Activated CD4-positive, alpha-beta T cell treated with anti-CD3 and anti-CD28 coated beads, Interleukin-2, amount 10 ng/mL, durations not matched to agents 24 days and 14 days (primary cell): ENCODE measurements at regions of chr10 and their contacts with region 1.

Region 1: DNA sequence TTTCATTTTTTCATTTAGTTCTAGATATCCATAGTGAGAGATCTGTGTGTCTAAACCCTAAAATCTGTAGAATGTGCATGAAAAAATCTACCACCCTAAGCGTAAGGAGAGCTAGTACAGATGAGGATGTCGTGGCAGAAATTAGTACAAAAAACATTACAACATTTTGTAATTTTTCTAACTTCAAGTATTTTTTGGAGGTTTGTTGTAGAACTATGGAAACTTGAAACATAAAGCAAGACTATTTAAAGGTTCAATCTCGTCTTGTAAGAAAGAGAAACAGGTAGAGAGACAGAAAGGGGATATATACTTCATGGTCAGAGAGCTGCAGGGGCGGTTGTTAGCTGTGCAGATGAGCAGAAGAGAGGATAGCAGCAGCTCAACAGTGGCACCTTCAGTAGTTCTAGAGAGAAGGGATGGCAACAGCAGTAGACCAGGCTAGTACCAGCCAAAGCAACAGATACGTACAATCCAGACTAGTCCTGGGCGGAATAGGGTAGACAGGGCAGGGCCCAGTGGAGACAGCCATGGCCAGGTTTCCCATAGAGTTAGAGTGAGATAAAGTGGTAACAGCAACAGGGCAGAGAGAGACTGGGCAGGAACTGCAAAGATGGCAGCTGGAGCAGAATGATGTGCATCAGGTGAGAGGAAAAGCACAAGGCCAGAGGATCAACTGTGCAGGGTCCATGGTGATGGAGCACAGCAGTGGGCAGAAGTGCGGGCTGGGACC is 145.2 kb downstream of the FRMD4A start:
- DNase-seq: peak; percentile 84
- H3K4me3 Mint-ChIP-seq: peak overlapping the region; percentile 62
- H3K27ac Mint-ChIP-seq: peak overlapping the region; percentile 92
- H3K4me1 Mint-ChIP-seq: peaks cover 19% of the 10 kb centered on the region
- H3K27me3 Mint-ChIP-seq: peaks cover 58% of the 10 kb centered on the region

Region 2: DNA sequence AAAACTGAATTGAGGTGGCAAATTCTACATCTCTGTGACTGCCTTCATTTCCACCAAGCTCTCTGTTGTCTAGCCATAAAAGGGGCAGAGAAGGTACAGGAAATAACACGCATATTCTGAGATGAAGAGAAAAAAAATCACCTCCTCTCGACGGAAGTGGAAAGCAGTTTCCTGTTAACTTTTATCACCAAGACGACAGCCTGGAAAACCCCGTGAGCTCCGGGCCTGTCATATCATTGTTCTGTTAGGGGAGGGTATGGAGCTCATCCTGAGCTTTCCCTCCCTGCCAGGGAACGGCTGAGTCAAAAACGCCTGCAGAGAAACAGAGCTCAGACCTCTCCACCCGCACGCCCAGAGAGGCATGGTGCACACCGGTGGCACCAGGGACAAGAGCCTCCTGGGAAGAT is 398.5 kb before region 1 on chr10:
- intact Hi-C with region 1: loop called (anchors 2 kb)
- DNase-seq: peak; percentile 94
- H3K4me3 Mint-ChIP-seq: peak overlapping the region; percentile 71
- H3K27ac Mint-ChIP-seq: peak overlapping the region; percentile 91
- H3K4me1 Mint-ChIP-seq: peaks cover 29% of the 10 kb centered on the region
- H3K27me3 Mint-ChIP-seq: no peaks in the 10 kb centered on the region

Region 3: GRCh38 chr10:14009371-14010100 is 175.9 kb before region 1 on chr10:
- intact Hi-C with region 1: loop called (anchors 2 kb)
- DNase-seq: peak; percentile 85
- H3K4me3 Mint-ChIP-seq: peak overlapping the region; percentile 82
- H3K27ac Mint-ChIP-seq: peak overlapping the region; percentile 82
- H3K4me1 Mint-ChIP-seq: peaks cover 28% of the 10 kb centered on the region
- H3K27me3 Mint-ChIP-seq: peaks cover 22% of the 10 kb centered on the region

Region 4: GRCh38 chr10:14282276-14282675 is 96.8 kb after region 1 on chr10:
- intact Hi-C with region 1: no loop called
- DNase-seq: no peak
- H3K4me3 Mint-ChIP-seq: no peak overlapping the region
- H3K27ac Mint-ChIP-seq: no peak overlapping the region
- H3K4me1 Mint-ChIP-seq: no peaks in the 10 kb centered on the region
- H3K27me3 Mint-ChIP-seq: peaks cover 4% of the 10 kb centered on the region

Region 5: DNA sequence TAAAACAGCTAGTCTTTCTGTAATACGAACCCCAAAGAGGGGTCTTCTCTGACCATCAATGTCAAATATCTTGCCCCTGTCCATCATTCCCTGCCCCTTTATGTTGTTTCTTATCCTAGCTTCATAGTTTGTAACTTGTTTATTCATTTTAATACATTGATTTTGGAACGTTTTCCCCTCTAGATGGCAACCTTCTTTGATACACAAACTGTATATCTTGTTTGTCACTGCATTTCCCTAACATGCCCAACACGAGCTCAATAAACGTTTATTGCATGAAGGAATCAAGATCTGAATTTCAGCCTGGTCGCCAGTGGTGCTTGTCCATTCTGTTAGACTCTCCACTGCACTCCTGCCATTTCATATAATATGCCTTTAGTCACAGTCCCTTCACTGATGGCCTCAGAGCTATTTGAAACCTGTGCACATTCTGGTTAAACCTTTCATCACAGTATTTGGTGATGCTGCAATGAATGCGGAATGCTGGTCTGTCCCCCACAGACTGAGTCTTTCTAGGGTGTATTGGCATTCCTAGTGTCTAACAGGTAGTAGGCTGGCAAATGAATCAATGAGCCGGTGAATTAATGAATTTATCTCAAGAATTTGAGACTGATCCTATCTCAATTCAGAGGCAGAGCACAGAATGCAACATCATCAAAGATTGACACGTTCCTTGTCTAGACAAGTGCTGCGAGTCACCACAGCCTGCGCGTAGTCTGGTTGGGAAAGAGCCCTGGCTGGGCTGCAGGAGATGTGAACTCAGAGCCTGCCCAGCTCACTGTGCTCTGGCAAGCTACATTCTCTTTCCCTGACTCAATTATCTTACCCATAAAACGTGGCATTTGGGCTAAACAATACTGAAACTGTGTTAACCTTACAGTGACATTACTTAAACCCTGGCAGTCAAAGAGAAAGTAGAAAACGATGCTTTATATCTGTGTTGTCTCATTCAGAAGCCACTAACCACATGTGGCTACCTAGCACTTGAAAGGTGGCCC is 200.4 kb after region 1 on chr10:
- intact Hi-C with region 1: loop called (anchors 10 kb)
- DNase-seq: peak; percentile 59
- H3K4me3 Mint-ChIP-seq: no peak overlapping the region
- H3K27ac Mint-ChIP-seq: no peak overlapping the region
- H3K4me1 Mint-ChIP-seq: peaks cover 33% of the 10 kb centered on the region
- H3K27me3 Mint-ChIP-seq: peaks cover 33% of the 10 kb centered on the region

Region 6: DNA sequence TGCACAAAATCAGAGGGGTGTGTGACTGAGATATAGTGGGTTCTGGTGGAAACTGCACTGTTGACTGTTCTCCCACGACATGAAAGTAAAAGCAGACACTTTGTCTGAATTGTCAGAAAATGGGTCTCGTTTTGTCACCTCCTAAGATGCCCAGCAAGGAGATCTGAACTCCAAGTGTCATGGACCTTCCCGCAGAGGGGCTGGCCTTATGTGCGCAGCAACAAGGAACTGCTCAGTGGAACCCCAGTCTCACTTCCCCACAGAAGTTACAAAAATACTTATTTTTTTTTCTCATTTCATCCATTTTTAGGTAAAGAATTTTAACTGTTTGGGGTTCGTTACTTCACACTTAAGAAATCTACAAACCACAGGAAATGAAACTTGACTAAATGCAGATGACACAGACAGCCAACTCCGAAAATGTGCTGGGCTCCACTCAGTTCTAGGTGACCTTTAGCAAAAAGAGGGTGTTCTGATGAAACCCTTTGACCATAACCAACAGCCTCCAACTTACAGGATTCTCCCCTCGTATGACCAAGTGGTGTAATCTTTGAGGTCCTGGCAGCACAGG is 474.2 kb after region 1 on chr10:
- intact Hi-C with region 1: loop called (anchors 10 kb)
- DNase-seq: peak; percentile 89
- H3K4me3 Mint-ChIP-seq: peak overlapping the region; percentile 64
- H3K27ac Mint-ChIP-seq: peak overlapping the region; percentile 92
- H3K4me1 Mint-ChIP-seq: peaks cover 60% of the 10 kb centered on the region
- H3K27me3 Mint-ChIP-seq: no peaks in the 10 kb centered on the region

Region 7: GRCh38 chr10:14954001-14954770 is 768.7 kb after region 1 on chr10 and contains the start of gene DCLRE1C:
- intact Hi-C with region 1: loop called (anchors 5 kb)
- DNase-seq: peak; percentile 97
- H3K4me3 Mint-ChIP-seq: peak within 1 kb of the TSS; percentile 96
- H3K27ac Mint-ChIP-seq: peak within 1 kb of the TSS; percentile 97
- H3K4me1 Mint-ChIP-seq: peaks cover 45% of the 10 kb centered on the region
- H3K27me3 Mint-ChIP-seq: no peaks in the 10 kb centered on the region
- total RNA-seq, gene DCLRE1C: 17.5 and 21.0 TPM in 2 replicates